Endothelial cell of umbilical vein (primary cell): ENCODE measurements at regions of chr9 and their contacts with region 1.

Region 1: GRCh38 chr9:114082017-114082762 is 4.1 kb upstream of the AMBP start:
- DNase-seq: peak; percentile 82
- H3K4me3 ChIP-seq: no peak overlapping the region
- H3K27ac ChIP-seq: no peak overlapping the region
- H3K4me1 ChIP-seq: no peaks in the 10 kb centered on the region
- H3K27me3 ChIP-seq: peaks cover 5 to 15% of the 10 kb centered on the region in 2 experiments
- CTCF ChIP-seq: peak; percentile 91 to 92
- POLR2A ChIP-seq: no peak

Region 2: DNA sequence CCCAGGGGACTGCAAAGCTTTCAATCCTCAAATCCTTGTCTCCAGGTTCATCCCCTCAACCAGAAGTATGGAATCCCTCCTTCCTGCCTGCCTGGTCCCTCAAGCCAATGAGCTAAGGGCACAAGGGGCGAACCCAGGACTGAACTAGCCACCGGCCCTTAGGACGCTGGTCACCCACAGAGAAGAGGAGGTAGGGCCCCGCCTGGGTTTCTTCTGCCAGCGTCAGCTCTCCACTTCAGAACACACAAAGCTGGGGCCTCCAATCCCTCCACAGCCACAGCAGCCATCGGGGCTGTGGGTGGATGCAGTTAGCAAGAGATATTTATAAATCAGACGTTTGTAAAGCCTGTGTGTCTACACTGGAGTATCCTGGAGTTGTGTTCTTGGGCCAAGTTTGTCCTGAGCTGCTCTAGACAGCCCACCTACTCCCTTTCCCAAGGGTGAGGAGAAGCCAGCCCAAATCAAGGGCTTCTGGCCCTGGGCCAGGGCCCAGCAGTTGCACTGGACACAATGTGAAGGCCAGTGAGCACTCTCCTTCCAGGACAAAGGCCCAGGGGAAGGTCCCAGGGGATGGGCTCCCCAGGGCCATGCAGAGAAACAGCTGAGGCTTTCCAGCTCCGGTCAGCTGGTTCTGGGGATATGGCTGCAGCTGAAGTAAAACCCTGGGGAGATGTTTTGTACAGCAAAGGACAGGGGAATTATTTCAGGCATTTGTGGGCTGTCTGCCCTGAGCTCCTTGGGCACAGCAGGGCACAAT is 23.0 kb before region 1 on chr9:
- CTCF ChIA-PET with region 1: interaction called, 10 read pairs
- POLR2A ChIA-PET with region 1: no interaction called
- dilution Hi-C with region 1: no loop called
- intact Hi-C with region 1: no loop called
- DNase-seq: no peak
- H3K4me3 ChIP-seq: no peak overlapping the region
- H3K27ac ChIP-seq: no peak overlapping the region
- H3K4me1 ChIP-seq: no peaks in the 10 kb centered on the region
- H3K27me3 ChIP-seq: peaks cover 4 to 9% of the 10 kb centered on the region in 2 experiments
- CTCF ChIP-seq: no peak
- POLR2A ChIP-seq: no peak

Region 3: DNA sequence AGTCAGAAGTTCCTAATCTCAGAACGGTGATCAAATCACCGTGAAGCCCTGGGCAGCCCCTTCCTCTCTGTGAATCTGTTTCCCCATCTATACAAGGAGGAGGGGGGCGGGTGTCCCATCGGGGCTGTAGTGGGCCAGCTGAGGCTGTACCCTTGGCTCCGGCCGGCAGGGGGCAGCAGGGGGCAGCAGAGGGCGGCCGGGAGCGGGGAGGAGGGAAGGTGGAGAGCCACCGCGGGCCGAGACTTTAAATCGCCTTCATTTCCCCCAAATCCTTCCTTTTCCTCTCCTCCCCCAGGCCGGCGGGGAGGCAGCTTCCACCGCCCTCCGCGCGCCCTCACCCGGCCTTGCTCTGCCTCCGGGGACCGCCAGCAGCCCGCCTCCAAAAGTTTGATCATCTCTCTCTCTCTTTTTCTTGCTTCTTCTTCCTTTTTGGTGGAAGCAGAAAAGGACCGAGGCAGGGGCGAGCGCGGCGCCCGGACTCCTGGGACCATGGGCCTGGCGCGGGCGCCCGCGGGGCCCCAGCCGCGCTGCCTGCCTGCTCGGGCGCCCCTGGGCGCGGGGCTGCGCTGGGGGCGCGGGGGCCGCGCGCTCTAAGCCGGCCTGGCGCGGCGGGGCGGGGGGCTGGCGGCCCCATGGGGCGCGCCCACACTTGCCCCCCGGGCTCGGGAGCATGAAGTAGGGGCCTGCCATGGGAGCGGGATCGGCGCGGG is 73.2 kb after region 1 on chr9 and contains the start of gene COL27A1:
- CTCF ChIA-PET with region 1: interaction called, 32 read pairs
- POLR2A ChIA-PET with region 1: no interaction called
- dilution Hi-C with region 1: no loop called
- intact Hi-C with region 1: loop called (anchors 1 kb)
- DNase-seq: peak; percentile 81
- H3K4me3 ChIP-seq: peak within 1 kb of the TSS; percentile 41 to 79 (median 68)
- H3K27ac ChIP-seq: peak within 1 kb of the TSS; percentile 36
- H3K4me1 ChIP-seq: peaks cover 25% of the 10 kb centered on the region
- H3K27me3 ChIP-seq: peaks cover 16 to 18% of the 10 kb centered on the region in 2 experiments
- CTCF ChIP-seq: peak; percentile 82 to 97
- POLR2A ChIP-seq: no peak
- total RNA-seq, gene COL27A1: 48.6 and 49.1 TPM in 2 replicates

Region 4: DNA sequence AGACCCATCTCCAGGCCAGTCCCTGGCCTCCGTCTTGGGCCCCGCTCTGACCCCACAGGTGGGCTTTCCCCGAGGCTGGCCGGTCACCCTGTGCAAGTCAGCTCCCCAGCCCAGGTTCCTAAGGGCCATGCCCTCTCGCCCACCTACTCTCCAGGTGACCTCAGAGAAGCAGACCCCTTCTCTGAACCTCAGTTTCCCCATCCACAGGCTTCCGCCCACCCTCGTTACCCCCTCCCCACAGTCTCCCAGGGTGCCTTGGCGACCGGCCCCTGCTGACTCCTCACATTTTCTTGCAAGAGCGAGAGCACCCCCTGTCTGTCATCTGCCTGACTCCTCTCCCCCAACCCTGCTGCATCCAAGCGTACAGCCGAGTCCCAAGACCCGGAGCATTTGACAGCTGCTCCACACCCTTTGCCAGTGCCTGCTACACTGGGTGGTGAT is 189.5 kb after region 1 on chr9:
- CTCF ChIA-PET with region 1: interaction called, 25 read pairs
- POLR2A ChIA-PET with region 1: no interaction called
- dilution Hi-C with region 1: loop called (anchors 25 kb)
- intact Hi-C with region 1: loop called (anchors 1 kb)
- DNase-seq: peak; percentile 58
- H3K4me3 ChIP-seq: no peak overlapping the region
- H3K27ac ChIP-seq: no peak overlapping the region
- H3K4me1 ChIP-seq: no peaks in the 10 kb centered on the region
- H3K27me3 ChIP-seq: no peaks in the 10 kb centered on the region
- CTCF ChIP-seq: peak; percentile 23 to 75
- POLR2A ChIP-seq: no peak

Region 5: GRCh38 chr9:114291064-114291474 is 208.9 kb after region 1 on chr9:
- CTCF ChIA-PET with region 1: interaction called, 195 read pairs
- POLR2A ChIA-PET with region 1: no interaction called
- dilution Hi-C with region 1: loop called (anchors 25 kb)
- intact Hi-C with region 1: loop called (anchors 1 kb)
- DNase-seq: peak; percentile 72
- H3K4me3 ChIP-seq: no peak overlapping the region
- H3K27ac ChIP-seq: no peak overlapping the region
- H3K4me1 ChIP-seq: no peaks in the 10 kb centered on the region
- H3K27me3 ChIP-seq: no peaks in the 10 kb centered on the region
- CTCF ChIP-seq: peak; percentile 77 to 79
- POLR2A ChIP-seq: no peak